ENCODE measurements at regions of chr7 and their contacts with region 1.

Region 1: DNA sequence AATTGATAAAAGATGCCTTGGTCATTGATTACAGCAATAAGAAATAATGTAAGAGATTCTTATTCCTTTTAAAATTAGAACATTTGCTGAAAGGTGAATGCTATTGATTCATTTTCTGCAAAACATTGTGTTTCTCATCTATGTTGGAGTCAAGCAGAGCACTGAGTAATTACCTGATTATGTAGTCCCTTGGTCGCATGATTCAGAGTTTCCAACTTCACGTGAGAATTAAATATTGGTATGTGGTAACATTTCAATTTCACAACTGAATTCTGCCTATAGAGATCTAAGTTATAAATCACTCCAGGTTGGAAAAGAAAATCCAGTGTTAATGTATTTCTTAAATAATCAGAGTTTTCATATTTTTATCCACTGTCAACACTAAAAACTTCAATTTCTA is 701.4 kb downstream of the PHTF2 start:
- DNase-seq: no peak
- H3K4me3 ChIP-seq: no peak overlapping the region
- H3K27ac ChIP-seq: no peak overlapping the region
- H3K27me3 ChIP-seq: no peaks in the 10 kb centered on the region
- CTCF ChIP-seq: no peak

Region 2: GRCh38 chr7:78510580-78511188 is 10.7 kb after region 1 on chr7:
- CTCF ChIA-PET with region 1: interaction called, 11 read pairs
- POLR2A ChIA-PET with region 1: no interaction called
- DNase-seq: peak; percentile 29
- H3K4me3 ChIP-seq: no peak overlapping the region
- H3K27ac ChIP-seq: no peak overlapping the region
- H3K27me3 ChIP-seq: no peaks in the 10 kb centered on the region
- CTCF ChIP-seq: peak; percentile 95

Measured in AG04450 (cell line).